ENCODE measurements at regions of chr2 and their contacts with region 1.

Region 1: DNA sequence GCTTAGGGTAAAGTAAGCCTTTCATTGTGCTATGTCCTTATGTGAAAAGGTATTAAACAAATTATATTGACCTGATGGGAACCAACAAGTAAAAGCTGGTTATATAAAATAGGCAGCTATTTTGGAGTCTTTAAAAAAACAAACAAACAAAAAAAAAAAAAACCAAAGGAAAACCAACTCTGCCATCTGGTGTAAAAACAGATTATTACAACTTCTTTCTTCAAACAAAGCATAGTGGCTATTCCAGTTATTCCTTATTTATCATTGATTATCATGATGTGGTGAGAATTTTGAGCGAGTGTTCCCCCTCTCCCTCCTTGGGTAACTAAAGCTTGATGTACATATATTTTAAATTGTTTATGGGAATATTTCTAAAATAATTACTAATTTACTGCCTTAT is 122.4 kb upstream of the FHL2 start:
- DNase-seq: no peak
- H3K4me3 ChIP-seq: no peak overlapping the region
- H3K27ac ChIP-seq: no peak overlapping the region
- H3K4me1 ChIP-seq: no peaks in the 10 kb centered on the region
- H3K27me3 ChIP-seq: no peaks in the 10 kb centered on the region
- CTCF ChIP-seq: peak in 1 of 3 experiments; percentile 32; a peak in 1 of 4 replicates
- EP300 ChIP-seq: no peak
- POLR2A ChIP-seq: no peak
- RAD21 ChIP-seq: peak in 1 of 2 experiments; percentile 71

Region 2: DNA sequence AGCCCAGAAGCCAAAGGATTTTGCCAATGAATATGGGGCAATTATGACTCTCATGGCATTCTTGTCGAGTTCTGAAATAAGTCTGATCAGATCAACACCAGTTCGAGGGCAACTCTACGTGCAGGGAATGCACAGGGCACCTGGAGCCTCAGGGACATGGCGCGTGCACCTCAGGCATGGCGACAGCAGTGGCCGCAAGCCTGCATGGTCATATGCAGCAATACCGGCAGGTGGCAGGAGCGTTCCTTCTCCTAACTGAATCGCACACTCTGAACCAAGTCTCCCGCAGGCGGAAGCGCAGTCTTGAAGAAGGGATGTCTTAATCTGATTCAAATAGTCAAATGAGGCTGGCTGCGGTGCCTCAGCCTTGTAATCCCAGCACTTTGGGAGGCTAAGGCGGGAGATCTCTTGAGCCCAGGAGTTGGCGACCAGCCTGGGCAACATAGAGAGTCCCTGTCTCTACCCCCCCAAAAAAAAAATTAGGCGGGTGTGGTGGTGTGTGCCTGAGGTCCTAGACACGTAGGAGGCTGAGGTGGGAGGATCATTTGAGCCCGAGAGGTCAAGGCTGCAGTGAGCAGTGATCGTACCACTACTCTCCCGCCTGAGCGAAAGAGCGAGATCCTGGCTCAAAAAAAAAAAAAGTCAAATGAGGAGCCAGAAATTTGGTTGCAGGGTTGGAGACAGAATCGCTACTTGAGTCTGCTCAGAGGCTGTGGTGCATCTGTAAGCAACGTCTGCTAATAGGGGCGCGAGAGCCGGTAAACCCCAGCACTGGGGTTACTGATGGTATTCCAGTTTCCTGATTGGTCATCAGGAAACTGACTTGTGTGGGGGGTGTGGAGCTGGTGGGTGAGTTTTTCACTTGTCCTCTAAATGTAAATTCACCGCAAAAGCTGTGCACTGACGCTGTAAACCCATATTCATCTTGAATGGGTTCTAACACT is 151.2 kb before region 1 on chr2:
- CTCF ChIA-PET with region 1: interaction called, 122 read pairs
- POLR2A ChIA-PET with region 1: no interaction called
- DNase-seq: peak; percentile 75 to 89
- H3K4me3 ChIP-seq: no peak overlapping the region
- H3K27ac ChIP-seq: no peak overlapping the region
- H3K4me1 ChIP-seq: no peaks in the 10 kb centered on the region
- H3K27me3 ChIP-seq: no peaks in the 10 kb centered on the region
- CTCF ChIP-seq: peak; percentile 95 to 99 (median 98)
- EP300 ChIP-seq: no peak
- POLR2A ChIP-seq: no peak
- RAD21 ChIP-seq: peak; percentile 95 to 96

Region 3: GRCh38 chr2:105388971-105389381 is 132.2 kb before region 1 on chr2:
- CTCF ChIA-PET with region 1: interaction called, 27 read pairs
- POLR2A ChIA-PET with region 1: no interaction called
- DNase-seq: no peak
- H3K4me3 ChIP-seq: no peak overlapping the region
- H3K27ac ChIP-seq: no peak overlapping the region
- H3K4me1 ChIP-seq: no peaks in the 10 kb centered on the region
- H3K27me3 ChIP-seq: no peaks in the 10 kb centered on the region
- CTCF ChIP-seq: no peak
- EP300 ChIP-seq: no peak
- POLR2A ChIP-seq: no peak
- RAD21 ChIP-seq: no peak

Region 4: DNA sequence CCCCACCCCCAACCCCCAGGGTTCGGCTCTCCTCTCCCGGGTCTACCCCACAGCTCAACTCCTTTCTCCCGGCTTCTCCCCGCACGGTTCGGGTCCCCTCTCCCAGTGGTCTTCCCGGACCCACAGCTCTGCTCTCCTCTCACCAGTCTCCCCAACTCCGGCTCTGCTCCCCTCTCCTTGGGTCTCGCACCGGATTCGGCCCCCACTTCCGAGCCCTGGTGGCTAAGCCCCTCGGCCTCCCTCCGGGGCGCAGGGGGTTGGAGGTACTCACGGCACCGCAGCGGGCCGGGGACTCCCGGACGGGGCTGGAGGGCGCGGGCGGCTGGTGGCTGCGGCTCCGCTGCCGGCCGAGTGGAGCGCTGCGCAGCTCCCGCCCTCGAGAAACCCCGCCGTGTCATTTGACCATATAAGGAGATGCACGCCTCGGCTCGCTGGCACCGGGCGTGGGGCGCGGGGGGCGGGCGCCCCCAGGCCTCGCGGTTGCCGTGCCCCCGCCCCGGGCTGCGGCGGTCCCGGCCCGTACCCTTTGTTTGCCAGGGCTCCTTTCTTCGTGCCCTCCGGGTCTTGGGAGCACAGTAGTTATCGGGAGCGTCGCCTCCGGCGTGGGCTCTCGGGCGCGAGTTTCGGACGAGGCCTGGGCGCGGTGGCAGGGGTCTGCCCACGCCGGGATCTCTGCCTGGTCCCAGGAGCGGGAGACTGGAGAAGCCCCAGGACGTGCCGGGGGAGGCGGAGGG is 122.3 kb before region 1 on chr2 and contains the start of gene FHL2:
- CTCF ChIA-PET with region 1: interaction called, 27 read pairs
- POLR2A ChIA-PET with region 1: interaction called, 3 read pairs
- DNase-seq: peak; percentile 60 to 89
- H3K4me3 ChIP-seq: peak within 1 kb of the TSS; percentile 81 to 96 (median 92)
- H3K27ac ChIP-seq: peak within 1 kb of the TSS; percentile 92
- H3K4me1 ChIP-seq: peaks cover 0 to 10% (median 4%) of the 10 kb centered on the region in 4 experiments; a peak in 6 of 7 replicates
- H3K27me3 ChIP-seq: peaks cover 7 to 17% (median 13%) of the 10 kb centered on the region in 4 experiments
- CTCF ChIP-seq: peak; percentile 45 to 55 (median 46)
- EP300 ChIP-seq: peak in 1 of 2 experiments; percentile 76; a peak in 1 of 3 replicates
- POLR2A ChIP-seq: peak; percentile 64 to 93
- RAD21 ChIP-seq: peak in 1 of 2 experiments; percentile 9; a peak in 1 of 4 replicates
- total RNA-seq, gene FHL2: 33.2 and 33.4 TPM in 2 replicates

Region 5: GRCh38 chr2:105403785-105404698 is 117.2 kb before region 1 on chr2:
- CTCF ChIA-PET with region 1: interaction called, 19 read pairs
- POLR2A ChIA-PET with region 1: interaction called, 3 read pairs
- DNase-seq: no peak
- H3K4me3 ChIP-seq: no peak overlapping the region
- H3K27ac ChIP-seq: no peak overlapping the region
- H3K4me1 ChIP-seq: peaks cover 0 to 6% (median 2%) of the 10 kb centered on the region in 4 experiments; a peak in 5 of 7 replicates
- H3K27me3 ChIP-seq: peaks cover 7 to 12% (median 11%) of the 10 kb centered on the region in 4 experiments
- CTCF ChIP-seq: peak; percentile 26 to 65 (median 48)
- EP300 ChIP-seq: no peak
- POLR2A ChIP-seq: no peak
- RAD21 ChIP-seq: peak; percentile 12 to 41; a peak in 2 of 4 replicates

Region 6: DNA sequence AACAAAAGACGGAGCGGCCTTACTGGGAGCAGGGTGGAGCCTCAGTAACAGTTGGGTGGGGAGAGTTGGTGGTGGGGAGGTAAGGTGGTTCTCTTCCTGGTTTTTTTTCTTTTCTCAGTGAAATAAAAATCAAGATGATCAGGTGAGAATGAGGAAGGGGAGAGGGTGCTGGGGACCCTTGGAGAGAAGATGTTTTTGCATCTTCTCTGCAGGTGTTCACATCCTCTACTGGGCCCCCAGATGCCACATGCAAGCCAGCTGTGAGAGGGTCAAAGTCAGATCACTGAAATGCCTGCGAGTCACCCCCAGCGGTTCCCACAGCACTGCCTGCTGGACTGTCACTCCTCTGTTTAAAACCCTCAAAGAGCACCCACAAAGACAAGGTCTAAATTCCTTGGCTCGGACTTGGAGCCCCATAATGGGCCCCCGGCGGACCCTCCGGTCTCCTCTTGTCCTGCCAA is 52.6 kb before region 1 on chr2:
- CTCF ChIA-PET with region 1: no interaction called
- POLR2A ChIA-PET with region 1: no interaction called
- DNase-seq: no peak
- H3K4me3 ChIP-seq: no peak overlapping the region
- H3K27ac ChIP-seq: no peak overlapping the region
- H3K4me1 ChIP-seq: peaks cover 0 to 3% (median 0%) of the 10 kb centered on the region in 4 experiments; a peak in 3 of 7 replicates
- H3K27me3 ChIP-seq: no peaks in the 10 kb centered on the region
- CTCF ChIP-seq: no peak
- EP300 ChIP-seq: no peak
- POLR2A ChIP-seq: no peak
- RAD21 ChIP-seq: no peak

Region 7: DNA sequence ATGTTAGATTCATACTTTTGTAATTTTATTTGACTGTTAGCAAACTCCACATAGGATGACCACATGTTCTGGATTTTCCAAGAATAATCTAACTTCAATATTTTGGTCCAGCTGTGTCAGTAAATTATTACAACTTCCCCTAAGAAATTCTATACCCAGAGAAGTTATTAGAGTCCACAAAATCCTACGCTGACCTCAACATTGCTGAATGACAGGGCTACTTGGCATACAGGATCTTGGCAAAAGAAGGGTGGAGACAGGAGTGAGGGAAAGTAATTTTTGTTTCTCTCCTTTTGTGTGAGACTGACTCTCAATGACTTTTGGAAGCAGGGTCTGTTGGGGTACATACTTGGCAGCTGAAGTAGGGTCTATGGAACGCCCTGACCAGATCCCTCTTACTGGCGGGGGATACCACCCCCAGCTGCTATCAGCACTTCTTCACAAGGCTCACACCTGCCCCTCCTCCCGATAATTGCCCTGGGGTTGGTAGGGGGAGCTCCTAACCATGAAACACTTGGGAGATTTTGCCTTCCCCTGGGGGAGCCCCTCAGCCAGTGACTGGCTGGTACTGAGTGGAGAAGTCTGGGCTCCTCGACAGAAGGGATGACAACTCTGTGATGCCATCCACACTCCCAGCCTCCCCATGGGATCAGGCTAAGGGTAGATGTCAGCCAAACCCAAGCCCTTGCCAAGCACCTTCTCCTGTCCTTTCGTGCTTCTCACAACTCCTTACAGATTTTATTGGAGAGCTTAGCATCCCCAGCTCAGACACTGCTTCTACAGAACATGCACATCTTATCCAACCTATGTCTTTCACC is 11.7 kb before region 1 on chr2:
- CTCF ChIA-PET with region 1: interaction called, 10 read pairs
- POLR2A ChIA-PET with region 1: no interaction called
- DNase-seq: no peak
- H3K4me3 ChIP-seq: no peak overlapping the region
- H3K27ac ChIP-seq: no peak overlapping the region
- H3K4me1 ChIP-seq: no peaks in the 10 kb centered on the region
- H3K27me3 ChIP-seq: no peaks in the 10 kb centered on the region
- CTCF ChIP-seq: no peak
- EP300 ChIP-seq: no peak
- POLR2A ChIP-seq: no peak
- RAD21 ChIP-seq: no peak

Region 8: DNA sequence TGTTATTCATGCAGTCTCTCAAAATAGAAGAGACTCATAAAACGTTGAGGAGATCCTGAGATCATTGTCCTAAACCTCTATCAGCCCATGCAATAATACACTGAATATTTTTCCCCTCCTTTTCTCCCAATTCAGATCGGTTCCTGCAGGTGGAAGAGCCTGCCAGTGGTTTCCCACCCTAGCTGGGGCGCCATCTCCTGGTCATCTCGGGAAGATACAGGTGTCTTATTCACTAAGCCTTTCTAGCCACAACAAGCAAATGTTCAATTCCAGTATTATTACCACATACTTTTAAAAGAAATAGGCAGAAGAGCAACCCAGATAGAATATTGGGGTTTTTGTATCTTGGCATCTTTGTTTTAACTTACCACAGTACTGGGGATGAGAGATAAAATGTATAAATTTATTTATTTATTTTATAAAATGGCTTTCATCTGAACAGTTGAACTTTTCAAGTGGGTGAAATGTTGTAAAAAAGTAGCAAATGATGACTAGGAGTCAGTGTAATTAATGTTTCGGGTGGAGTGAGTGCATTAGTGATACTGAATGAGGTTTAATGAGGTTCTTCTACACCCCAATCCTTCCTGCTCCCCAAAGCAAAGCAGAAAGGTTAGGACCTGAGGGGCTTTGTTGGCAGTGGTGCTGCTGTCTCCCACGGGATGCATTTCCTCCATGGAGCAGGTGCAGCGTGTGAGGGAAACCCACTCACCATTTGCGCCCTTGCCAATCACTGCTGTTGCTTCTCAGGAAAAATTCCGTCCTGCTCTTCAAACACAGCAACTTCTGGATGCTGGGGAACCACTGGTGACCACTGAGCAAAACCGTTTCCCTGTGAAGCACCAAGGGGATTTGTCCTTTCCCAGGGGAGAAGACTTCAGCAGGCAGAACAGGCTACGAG is 24.8 kb after region 1 on chr2:
- CTCF ChIA-PET with region 1: interaction called, 22 read pairs
- POLR2A ChIA-PET with region 1: no interaction called
- DNase-seq: peak; percentile 41 to 86
- H3K4me3 ChIP-seq: no peak overlapping the region
- H3K27ac ChIP-seq: no peak overlapping the region
- H3K4me1 ChIP-seq: no peaks in the 10 kb centered on the region; a peak in 2 of 7 replicates
- H3K27me3 ChIP-seq: no peaks in the 10 kb centered on the region
- CTCF ChIP-seq: peak; percentile 73 to 93 (median 73)
- EP300 ChIP-seq: no peak
- POLR2A ChIP-seq: no peak
- RAD21 ChIP-seq: peak; percentile 72 to 81

Region 9: DNA sequence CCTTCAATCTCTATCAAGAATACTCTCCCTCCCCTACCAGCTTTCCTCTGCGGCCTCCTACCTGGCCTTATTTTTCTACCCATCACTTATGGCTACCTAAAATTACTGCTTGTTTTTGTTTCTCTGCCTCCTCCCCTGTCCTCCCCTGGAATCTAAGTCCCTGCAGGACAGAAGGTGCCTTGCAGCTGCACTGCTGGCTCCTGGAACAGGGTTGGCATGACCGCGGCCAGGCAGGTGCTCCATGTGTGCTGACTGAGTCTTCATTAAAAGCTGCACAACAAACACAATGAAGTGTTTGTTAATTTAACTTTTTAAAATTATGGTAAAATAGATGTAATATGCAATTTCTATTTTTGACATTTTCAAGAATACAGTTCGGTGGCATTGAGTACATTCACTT is 49.5 kb after region 1 on chr2:
- CTCF ChIA-PET with region 1: no interaction called
- POLR2A ChIA-PET with region 1: no interaction called
- DNase-seq: no peak
- H3K4me3 ChIP-seq: no peak overlapping the region
- H3K27ac ChIP-seq: no peak overlapping the region
- H3K4me1 ChIP-seq: no peaks in the 10 kb centered on the region
- H3K27me3 ChIP-seq: no peaks in the 10 kb centered on the region; a peak in 2 of 7 replicates
- CTCF ChIP-seq: peak in 1 of 3 experiments; percentile 10; a peak in 1 of 4 replicates
- EP300 ChIP-seq: no peak
- POLR2A ChIP-seq: no peak
- RAD21 ChIP-seq: no peak; a peak in 1 of 4 replicates